ENCODE measurements at regions of chr2 and their contacts with region 1.

Region 1: GRCh38 chr2:106020821-106021661 is 173.1 kb downstream of the UXS1 start:
- DNase-seq: no peak
- ATAC-seq: peak; percentile 41

Region 2: DNA sequence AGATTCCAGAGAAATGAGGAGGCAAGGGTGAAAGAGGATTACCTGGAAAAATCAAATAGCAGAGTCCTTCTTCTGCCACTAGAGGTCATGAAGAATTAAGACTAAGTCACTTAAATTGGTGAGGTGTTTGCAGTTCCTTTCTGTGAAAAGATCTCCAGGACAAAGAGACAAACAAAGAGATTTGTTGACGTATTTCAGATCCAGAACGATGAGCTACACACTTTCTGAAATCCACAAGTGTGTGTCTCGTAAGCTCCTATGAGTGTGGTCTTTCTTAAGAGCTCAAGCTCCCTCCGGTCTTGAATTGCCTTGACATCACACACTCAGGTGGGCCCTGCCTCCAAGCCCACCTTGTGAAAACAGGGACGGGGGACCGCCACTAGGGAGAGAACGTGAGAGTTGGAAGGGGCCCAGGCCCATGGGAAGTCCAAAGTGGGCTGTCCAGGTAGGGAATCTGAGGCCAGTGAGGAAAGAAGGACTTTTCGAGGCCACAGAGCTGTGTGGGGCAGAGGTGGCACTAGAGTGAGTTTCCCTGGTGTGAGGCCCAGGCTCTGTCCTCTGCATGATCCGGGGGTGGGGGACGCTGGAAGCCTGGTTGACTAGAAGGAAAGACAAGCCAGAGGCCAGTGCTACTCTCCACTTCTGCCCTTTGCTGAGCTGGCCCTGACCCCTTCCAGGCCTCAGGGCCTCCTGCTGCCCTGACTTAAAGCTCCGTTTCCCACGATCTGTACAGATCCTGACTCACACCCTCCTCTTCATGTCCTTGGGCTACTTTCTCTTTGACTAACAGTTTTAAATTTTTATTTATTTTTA is 444.4 kb before region 1 on chr2:
- intact Hi-C with region 1: loop called (anchors 10 kb)
- DNase-seq: no peak
- ATAC-seq: peak; percentile 33

Region 3: DNA sequence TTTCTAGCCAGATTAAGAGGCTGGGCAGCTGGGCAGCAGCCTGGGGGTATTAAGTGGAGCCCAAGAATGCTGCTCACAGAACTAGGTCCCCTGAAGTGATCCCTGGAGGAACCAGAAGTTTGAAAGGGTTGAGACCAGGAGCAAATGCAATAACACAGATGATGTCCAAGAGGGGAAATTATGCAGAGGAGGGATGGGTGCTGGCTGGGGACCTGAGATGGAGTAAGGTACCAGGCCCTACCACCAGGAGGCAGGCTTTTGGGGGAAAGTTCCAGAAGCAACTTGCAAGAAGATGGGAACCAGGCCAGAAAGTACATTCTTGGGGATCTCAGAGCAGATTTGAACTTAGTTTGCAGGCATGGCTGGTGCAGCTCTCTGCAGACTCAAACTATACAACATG is 101.2 kb before region 1 on chr2:
- intact Hi-C with region 1: loop called (anchors 10 kb)
- DNase-seq: no peak
- ATAC-seq: peak; percentile 13

Region 4: GRCh38 chr2:106288873-106289272 is 267.8 kb after region 1 on chr2:
- intact Hi-C with region 1: no loop called
- DNase-seq: no peak
- ATAC-seq: no peak

Measured in Right ventricle myocardium inferior (tissue), 1 donor.